K562 (cell line): ENCODE measurements at regions of chr5 and their contacts with region 1.

Region 1: DNA sequence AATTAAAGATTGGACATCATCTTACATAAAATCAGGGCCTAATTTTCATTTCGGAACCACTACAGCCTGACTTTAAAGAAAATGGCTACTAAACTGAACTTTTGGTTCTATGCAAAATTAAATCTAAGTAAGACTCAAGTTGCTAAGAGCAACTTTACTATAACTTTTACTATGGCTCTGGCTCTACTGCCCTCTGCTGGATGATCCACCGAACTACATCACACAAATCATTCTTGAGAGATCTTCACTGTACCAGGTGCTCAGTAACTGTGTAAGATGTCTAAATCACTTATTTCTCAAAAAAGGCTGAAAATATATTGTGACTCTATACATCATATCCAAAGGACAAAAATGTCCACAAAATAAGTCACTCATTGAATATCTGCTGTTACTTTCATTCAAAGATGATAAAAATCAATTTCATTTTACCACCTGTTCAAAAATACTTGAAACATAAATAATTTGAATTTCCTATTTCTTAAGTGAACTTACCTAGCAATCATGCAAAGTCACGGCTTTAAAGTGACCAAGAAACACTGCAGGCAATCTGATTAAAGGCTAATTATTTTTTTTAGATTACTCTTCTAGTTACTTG is 13.5 kb downstream of the MOCS2 start:
- DNase-seq: peak; percentile 54 to 66 (median 58)
- ATAC-seq: peak; percentile 86
- H3K4me3 ChIP-seq: no peak overlapping the region
- H3K27ac ChIP-seq: no peak overlapping the region
- H3K4me1 ChIP-seq: no peaks in the 10 kb centered on the region
- H3K27me3 ChIP-seq: no peaks in the 10 kb centered on the region
- CTCF ChIP-seq: peak; percentile 54 to 73 (median 71)
- EP300 ChIP-seq: no peak
- POLR2A ChIP-seq: no peak
- RAD21 ChIP-seq: peak; percentile 70 to 74

Region 2: GRCh38 chr5:52693280-52693679 is 402.7 kb before region 1 on chr5:
- CTCF ChIA-PET with region 1: no interaction called
- POLR2A ChIA-PET with region 1: no interaction called
- in situ Hi-C with region 1: no loop called
- intact Hi-C with region 1: no loop called
- DNase-seq: peak in 1 of 4 experiments; percentile 10
- ATAC-seq: no peak; the same call in 2 of the 3 replicates
- H3K4me3 ChIP-seq: no peak overlapping the region
- H3K27ac ChIP-seq: no peak overlapping the region
- H3K4me1 ChIP-seq: no peaks in the 10 kb centered on the region
- H3K27me3 ChIP-seq: no peaks in the 10 kb centered on the region
- CTCF ChIP-seq: peak; percentile 21 to 23 (median 23); a peak in 3 of 6 replicates
- EP300 ChIP-seq: no peak
- POLR2A ChIP-seq: no peak
- RAD21 ChIP-seq: peak in 1 of 2 experiments; percentile 38; a peak in 2 of 4 replicates

Region 3: GRCh38 chr5:52799983-52800393 is 296.0 kb before region 1 on chr5:
- CTCF ChIA-PET with region 1: no interaction called
- POLR2A ChIA-PET with region 1: no interaction called
- in situ Hi-C with region 1: no loop called
- intact Hi-C with region 1: loop called (anchors 10 kb)
- DNase-seq: peak; percentile 94 to 96 (median 94)
- ATAC-seq: peak; percentile 87
- H3K4me3 ChIP-seq: peak overlapping the region; percentile 65
- H3K27ac ChIP-seq: peak overlapping the region; percentile 95
- H3K4me1 ChIP-seq: peaks cover 0 to 10% of the 10 kb centered on the region in 2 experiments; a peak in 4 of 5 replicates
- H3K27me3 ChIP-seq: no peaks in the 10 kb centered on the region
- CTCF ChIP-seq: no peak
- EP300 ChIP-seq: no peak
- POLR2A ChIP-seq: peak; percentile 82
- RAD21 ChIP-seq: no peak

Region 4: DNA sequence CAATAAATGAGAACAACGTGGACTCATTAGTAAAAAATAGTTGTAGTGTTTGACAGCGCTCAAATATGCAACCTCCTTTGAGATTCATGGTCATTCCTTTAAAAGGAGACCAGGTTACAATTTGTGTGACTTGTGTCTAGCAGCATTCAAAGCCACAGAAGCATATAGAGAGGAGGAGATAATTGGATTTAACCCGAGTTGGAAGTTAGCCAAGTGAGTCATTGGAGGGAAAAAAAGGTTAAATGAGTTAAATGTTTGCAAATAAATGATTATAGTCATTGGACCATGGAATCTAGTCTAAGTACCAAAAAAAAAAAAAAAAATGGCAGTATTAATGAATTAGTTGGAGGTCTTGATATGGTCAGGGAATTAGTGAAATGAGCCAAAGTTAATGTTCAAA is 217.4 kb before region 1 on chr5:
- CTCF ChIA-PET with region 1: no interaction called
- POLR2A ChIA-PET with region 1: no interaction called
- in situ Hi-C with region 1: no loop called
- intact Hi-C with region 1: no loop called
- DNase-seq: no peak
- ATAC-seq: no peak
- H3K4me3 ChIP-seq: no peak overlapping the region
- H3K27ac ChIP-seq: no peak overlapping the region
- H3K4me1 ChIP-seq: no peaks in the 10 kb centered on the region
- H3K27me3 ChIP-seq: no peaks in the 10 kb centered on the region
- CTCF ChIP-seq: no peak
- EP300 ChIP-seq: no peak
- POLR2A ChIP-seq: no peak
- RAD21 ChIP-seq: no peak

Region 5: GRCh38 chr5:52948418-52949076 is 147.5 kb before region 1 on chr5:
- CTCF ChIA-PET with region 1: interaction called, 11 read pairs
- POLR2A ChIA-PET with region 1: no interaction called
- in situ Hi-C with region 1: loop called (anchors 5 kb)
- intact Hi-C with region 1: loop called (anchors 1 kb)
- DNase-seq: peak; percentile 22 to 57 (median 27)
- ATAC-seq: peak; percentile 94
- H3K4me3 ChIP-seq: no peak overlapping the region
- H3K27ac ChIP-seq: no peak overlapping the region
- H3K4me1 ChIP-seq: no peaks in the 10 kb centered on the region
- H3K27me3 ChIP-seq: peaks cover 0 to 4% of the 10 kb centered on the region in 2 experiments; a peak in 2 of 5 replicates
- CTCF ChIP-seq: peak; percentile 62 to 78 (median 63)
- EP300 ChIP-seq: no peak
- POLR2A ChIP-seq: no peak
- RAD21 ChIP-seq: peak; percentile 86 to 87